ENCODE measurements at regions of chr20 and their contacts with region 1.

Region 1: DNA sequence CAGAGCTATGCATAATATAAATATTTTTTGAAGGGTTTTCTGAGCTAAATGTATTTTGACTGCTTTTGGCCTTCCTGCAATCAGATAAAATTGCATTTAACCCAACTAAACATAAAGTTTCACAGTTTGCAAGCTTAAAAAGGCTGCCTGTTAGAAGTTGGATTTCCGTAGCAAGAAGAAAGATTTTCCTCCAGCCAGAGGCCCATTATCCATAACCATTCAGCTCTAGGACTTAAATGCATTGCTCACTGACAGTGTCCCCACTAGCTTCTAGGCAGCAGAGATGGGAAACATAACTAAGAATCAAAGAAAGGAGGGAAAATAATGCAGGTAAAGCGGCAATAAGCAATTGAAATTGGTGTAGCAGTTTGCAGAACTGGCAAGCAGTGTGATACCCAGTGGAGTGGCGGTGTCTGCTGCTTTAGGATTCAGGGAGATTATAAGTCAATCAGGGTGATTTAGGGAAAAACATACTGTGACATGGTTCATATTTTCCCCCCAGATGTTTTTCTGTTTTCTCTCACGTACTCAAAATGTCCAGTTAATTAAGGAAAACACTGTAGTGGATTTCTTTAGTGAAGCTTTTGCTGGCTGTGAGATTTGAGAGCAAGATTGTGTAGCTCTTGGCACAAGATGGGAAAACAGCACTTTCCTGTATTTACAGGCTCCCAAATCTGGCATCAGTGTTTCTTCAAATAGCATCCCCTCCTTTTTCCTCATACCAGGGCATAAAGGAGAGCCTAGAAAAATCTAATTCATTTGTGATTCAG is 69.1 kb downstream of the CTNNBL1 start:
- DNase-seq: no peak
- H3K4me3 ChIP-seq: no peak overlapping the region
- H3K4me3 Mint-ChIP-seq: no peak overlapping the region
- H3K27ac ChIP-seq: no peak overlapping the region
- H3K27ac Mint-ChIP-seq: no peak overlapping the region
- H3K4me1 ChIP-seq: no peaks in the 10 kb centered on the region
- H3K4me1 Mint-ChIP-seq: peaks cover 0 to 3% (median under 1%) of the 10 kb centered on the region in 3 donors
- H3K27me3 ChIP-seq: no peaks in the 10 kb centered on the region
- H3K27me3 Mint-ChIP-seq: no peaks in the 10 kb centered on the region

Region 2: GRCh38 chr20:36839150-36839549 is 923.8 kb before region 1 on chr20:
- CTCF ChIA-PET with region 1: no interaction called
- POLR2A ChIA-PET with region 1: interaction called, 11 read pairs
- DNase-seq: no peak
- H3K4me3 ChIP-seq: no peak overlapping the region
- H3K4me3 Mint-ChIP-seq: peak overlapping the region in 1 of 7 donors; percentile 13
- H3K27ac ChIP-seq: no peak overlapping the region
- H3K27ac Mint-ChIP-seq: peak overlapping the region in 1 of 8 donors; percentile 85
- H3K4me1 ChIP-seq: peaks cover 10% of the 10 kb centered on the region
- H3K4me1 Mint-ChIP-seq: peaks cover 13 to 27% (median 20%) of the 10 kb centered on the region in 3 donors
- H3K27me3 ChIP-seq: no peaks in the 10 kb centered on the region
- H3K27me3 Mint-ChIP-seq: no peaks in the 10 kb centered on the region

Region 3: DNA sequence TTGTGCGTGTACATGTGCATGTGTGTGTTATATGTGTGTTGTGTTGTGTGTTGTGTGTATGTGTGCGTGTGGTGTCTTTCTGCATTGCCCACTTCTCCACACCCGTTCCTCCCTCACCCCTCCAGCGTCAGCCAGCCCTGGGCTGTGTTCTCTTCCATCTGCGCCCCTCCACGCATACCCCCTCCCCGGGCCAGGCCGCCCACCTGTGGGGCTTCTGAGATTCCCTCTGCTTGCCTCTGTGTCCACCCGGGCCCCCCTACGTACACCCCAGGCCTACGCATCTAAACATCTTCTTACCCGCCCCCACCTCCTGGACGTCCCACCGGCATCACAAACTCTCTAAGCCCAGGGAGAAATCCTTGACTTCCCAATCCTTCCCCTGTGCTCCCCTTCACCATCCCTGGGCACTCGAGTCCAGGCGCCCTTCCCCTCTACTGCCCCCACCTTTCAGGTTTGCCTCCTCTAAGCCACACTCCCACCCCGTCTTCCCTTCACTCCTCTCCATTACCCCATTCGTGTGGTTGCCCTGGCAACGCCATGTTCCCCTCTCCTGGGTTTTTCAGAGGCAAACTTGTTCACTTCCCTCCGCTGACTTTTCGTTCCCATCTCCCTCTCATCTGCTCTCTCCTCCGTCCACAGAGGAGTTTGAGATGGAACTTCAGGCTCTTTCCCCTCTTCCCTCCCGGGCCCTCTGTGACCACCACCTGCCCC is 323.5 kb before region 1 on chr20:
- CTCF ChIA-PET with region 1: no interaction called
- POLR2A ChIA-PET with region 1: no interaction called
- DNase-seq: no peak
- H3K4me3 ChIP-seq: no peak overlapping the region
- H3K4me3 Mint-ChIP-seq: no peak overlapping the region
- H3K27ac ChIP-seq: no peak overlapping the region
- H3K27ac Mint-ChIP-seq: no peak overlapping the region
- H3K4me1 ChIP-seq: no peaks in the 10 kb centered on the region
- H3K4me1 Mint-ChIP-seq: no peaks in the 10 kb centered on the region
- H3K27me3 ChIP-seq: no peaks in the 10 kb centered on the region
- H3K27me3 Mint-ChIP-seq: peaks cover 13 to 21% of the 10 kb centered on the region in 2 donors

Region 4: DNA sequence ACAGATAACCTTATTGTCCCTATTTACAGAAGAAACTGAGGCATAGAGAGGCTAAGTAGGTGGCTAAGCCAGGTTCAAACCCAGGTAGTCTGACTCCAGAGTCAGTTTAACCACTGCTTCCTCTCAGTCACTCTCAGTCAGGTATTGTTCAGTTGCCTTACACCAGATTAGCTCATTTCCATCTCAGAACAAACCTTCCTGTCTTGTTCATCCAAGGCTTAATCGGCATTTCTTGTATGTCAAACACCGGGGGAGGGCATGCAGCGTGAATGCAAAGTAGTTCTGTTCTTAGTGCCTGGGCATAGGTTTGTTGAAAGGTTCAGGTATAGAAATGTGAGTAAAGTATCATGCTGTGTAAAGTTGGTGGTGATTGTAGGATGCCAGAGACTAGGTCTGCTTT is 17.3 kb before region 1 on chr20:
- CTCF ChIA-PET with region 1: no interaction called
- POLR2A ChIA-PET with region 1: no interaction called
- DNase-seq: peak in 1 of 5 donors; percentile 7
- H3K4me3 ChIP-seq: no peak overlapping the region
- H3K4me3 Mint-ChIP-seq: peak overlapping the region in 1 of 7 donors; percentile 22
- H3K27ac ChIP-seq: no peak overlapping the region
- H3K27ac Mint-ChIP-seq: peak overlapping the region in 7 of 8 donors; percentile 1 to 81 (median 57)
- H3K4me1 ChIP-seq: no peaks in the 10 kb centered on the region
- H3K4me1 Mint-ChIP-seq: peaks cover 7 to 21% (median 20%) of the 10 kb centered on the region in 3 donors
- H3K27me3 ChIP-seq: no peaks in the 10 kb centered on the region
- H3K27me3 Mint-ChIP-seq: no peaks in the 10 kb centered on the region